ENCODE measurements at regions of chrX and their contacts with region 1.

Region 1: DNA sequence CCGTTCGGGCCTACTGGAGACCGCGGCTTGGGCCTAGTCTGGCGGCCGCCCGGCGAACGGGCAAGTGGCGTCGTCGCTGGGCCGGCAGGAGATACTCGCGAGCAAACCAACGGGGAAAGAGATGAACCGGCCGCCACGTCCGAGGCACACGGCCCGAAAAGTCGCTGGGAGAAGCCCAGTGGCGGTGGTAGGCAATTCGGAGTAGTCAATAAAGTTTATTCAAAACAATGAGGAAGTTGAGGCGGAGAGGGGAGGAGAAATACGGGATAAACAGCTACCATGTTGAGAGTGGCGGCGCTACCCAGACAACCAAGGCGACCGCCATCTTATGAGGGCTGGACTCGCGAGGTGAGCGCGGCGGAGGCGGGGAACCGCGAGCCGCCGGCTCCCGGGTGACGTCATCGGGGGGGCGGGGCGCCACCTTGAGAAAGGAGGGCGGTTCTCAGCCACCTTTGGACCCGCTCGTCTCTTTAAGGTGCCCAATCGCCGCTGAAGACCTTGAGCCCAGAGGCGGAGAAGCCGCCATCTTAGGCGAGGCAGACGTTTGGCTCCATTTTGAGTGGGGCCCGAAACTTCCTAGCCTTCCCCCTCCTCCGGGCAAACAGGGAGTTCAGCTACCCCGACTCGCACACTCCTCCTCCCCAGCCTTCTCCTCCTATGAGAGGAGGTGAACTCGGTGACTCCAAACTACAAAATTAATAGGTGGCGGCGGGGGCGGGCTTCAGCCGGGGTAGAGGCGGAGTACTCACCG is at the start of gene PHF8:
- DNase-seq: peak; percentile 95
- H3K4me3 Mint-ChIP-seq: peak within 1 kb of the TSS; percentile 89
- H3K27ac Mint-ChIP-seq: peak within 1 kb of the TSS; percentile 95
- H3K4me1 Mint-ChIP-seq: peaks cover 19% of the 10 kb centered on the region
- H3K27me3 Mint-ChIP-seq: no peaks in the 10 kb centered on the region
- total RNA-seq, gene PHF8: 51.7 to 53.2 TPM

Region 2: GRCh38 chrX:53224860-53225797 is 819.2 kb before region 1 on chrX and contains the start of gene KDM5C:
- CTCF ChIA-PET with region 1: no interaction called
- intact Hi-C with region 1: loop called (anchors 10 kb)
- DNase-seq: peak; percentile 89
- H3K4me3 Mint-ChIP-seq: peak within 1 kb of the TSS; percentile 91
- H3K27ac Mint-ChIP-seq: peak within 1 kb of the TSS; percentile 95
- H3K4me1 Mint-ChIP-seq: peaks cover 32% of the 10 kb centered on the region
- H3K27me3 Mint-ChIP-seq: no peaks in the 10 kb centered on the region
- total RNA-seq, gene KDM5C: 67.4 to 68.2 TPM

Region 3: DNA sequence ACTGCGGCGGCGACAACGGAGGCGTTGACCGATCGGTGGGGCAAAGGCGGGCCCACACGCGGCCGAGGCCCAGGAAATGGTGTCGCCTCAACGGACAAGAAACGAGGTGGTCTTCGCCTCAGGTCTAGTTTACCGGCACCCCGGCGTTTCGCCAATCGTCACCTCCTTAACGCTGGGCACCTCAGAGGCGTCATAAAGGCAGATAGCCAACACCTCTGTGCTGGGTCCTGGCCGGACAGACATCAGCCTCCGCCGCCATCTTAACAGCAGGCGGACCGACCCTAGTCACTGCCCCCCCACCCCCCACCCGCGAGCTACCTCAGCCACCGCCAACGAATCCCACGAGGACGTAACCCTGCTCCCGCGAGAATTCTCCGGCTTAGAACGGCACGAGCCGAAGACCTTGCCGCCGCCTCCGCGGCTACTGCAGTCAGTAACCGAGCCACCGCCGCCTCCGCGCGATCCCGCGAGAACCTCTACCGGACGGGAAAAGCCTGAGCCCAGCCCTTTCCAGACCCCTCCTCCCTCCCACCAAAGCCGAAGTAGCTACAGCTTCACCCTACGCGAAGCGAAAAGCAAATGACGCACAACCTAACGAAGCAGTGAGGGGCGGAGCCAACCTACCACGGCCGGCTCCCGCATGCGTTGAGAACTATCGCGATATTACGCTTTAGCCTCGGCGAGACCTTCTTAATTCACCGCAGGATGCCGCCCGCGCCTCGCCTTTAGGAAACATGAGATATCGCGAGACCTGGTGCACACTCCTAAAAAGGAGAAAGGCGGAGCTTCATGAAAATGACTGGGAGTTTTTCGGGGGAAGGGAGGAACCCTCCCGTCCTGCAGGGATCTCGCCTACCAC is 360.5 kb before region 1 on chrX:
- CTCF ChIA-PET with region 1: no interaction called
- intact Hi-C with region 1: loop called (anchors 1 kb)
- DNase-seq: peak; percentile 96
- H3K4me3 Mint-ChIP-seq: peak overlapping the region; percentile 92
- H3K27ac Mint-ChIP-seq: peak overlapping the region; percentile 94
- H3K4me1 Mint-ChIP-seq: peaks cover 27% of the 10 kb centered on the region
- H3K27me3 Mint-ChIP-seq: no peaks in the 10 kb centered on the region

Region 4: DNA sequence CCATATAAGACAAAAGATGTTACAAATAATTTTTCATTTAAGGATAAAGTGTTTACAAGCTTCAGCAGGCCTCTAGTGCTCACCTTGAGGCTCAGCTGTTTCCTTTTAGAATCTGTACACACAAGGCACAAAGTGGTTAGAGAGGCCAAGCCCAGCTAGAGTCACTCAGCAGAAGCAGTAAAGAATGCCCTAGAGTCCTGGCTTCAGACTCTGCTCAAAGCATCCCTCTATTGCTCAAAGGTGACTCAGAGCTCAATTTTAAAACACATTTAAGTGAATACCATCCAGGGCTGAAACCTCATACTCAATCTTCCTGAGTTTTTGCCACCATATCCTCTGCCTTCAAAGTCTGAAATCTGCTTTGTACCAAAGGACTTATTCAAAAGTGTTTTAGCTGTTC is 22.5 kb after region 1 on chrX:
- CTCF ChIA-PET with region 1: no interaction called
- intact Hi-C with region 1: no loop called
- DNase-seq: no peak
- H3K4me3 Mint-ChIP-seq: no peak overlapping the region
- H3K27ac Mint-ChIP-seq: no peak overlapping the region
- H3K4me1 Mint-ChIP-seq: no peaks in the 10 kb centered on the region
- H3K27me3 Mint-ChIP-seq: no peaks in the 10 kb centered on the region

Region 5: GRCh38 chrX:54182864-54183608 is 138.7 kb after region 1 on chrX and contains the start of gene FAM120C:
- CTCF ChIA-PET with region 1: no interaction called
- intact Hi-C with region 1: loop called (anchors 1 kb)
- DNase-seq: peak; percentile 66
- H3K4me3 Mint-ChIP-seq: peak within 1 kb of the TSS; percentile 75
- H3K27ac Mint-ChIP-seq: peak within 1 kb of the TSS; percentile 84
- H3K4me1 Mint-ChIP-seq: peaks cover 38% of the 10 kb centered on the region
- H3K27me3 Mint-ChIP-seq: no peaks in the 10 kb centered on the region
- total RNA-seq, gene FAM120C: 4.3 to 5.9 TPM

Region 6: GRCh38 chrX:54439967-54440871 is 395.9 kb after region 1 on chrX and contains the start of gene TSR2:
- CTCF ChIA-PET with region 1: no interaction called
- intact Hi-C with region 1: loop called (anchors 1 kb)
- DNase-seq: peak; percentile 86
- H3K4me3 Mint-ChIP-seq: peak within 1 kb of the TSS; percentile 89
- H3K27ac Mint-ChIP-seq: peak within 1 kb of the TSS; percentile 69
- H3K4me1 Mint-ChIP-seq: peaks cover 24% of the 10 kb centered on the region
- H3K27me3 Mint-ChIP-seq: no peaks in the 10 kb centered on the region
- total RNA-seq, gene TSR2: 24.4 to 26.1 TPM

Region 7: GRCh38 chrX:54808605-54809483 is 764.5 kb after region 1 on chrX:
- CTCF ChIA-PET with region 1: no interaction called
- intact Hi-C with region 1: loop called (anchors 1 kb)
- DNase-seq: peak; percentile 92
- H3K4me3 Mint-ChIP-seq: peak overlapping the region; percentile 88
- H3K27ac Mint-ChIP-seq: peak overlapping the region; percentile 88
- H3K4me1 Mint-ChIP-seq: peaks cover 15% of the 10 kb centered on the region
- H3K27me3 Mint-ChIP-seq: no peaks in the 10 kb centered on the region

Measured in activated naive CD4-positive, alpha-beta T cell treated with anti-CD3 and anti-CD28 coated beads for 36 hours (primary cell).